Panc1 (cell line): ENCODE measurements at regions of chr7 and their contacts with region 1.

Region 1: GRCh38 chr7:107201795-107202450 is 33.1 kb downstream of the HBP1 start:
- DNase-seq: peak; percentile 42
- ATAC-seq: peak; percentile 91
- H3K4me3 ChIP-seq: no peak overlapping the region
- H3K27ac ChIP-seq: no peak overlapping the region
- H3K4me1 ChIP-seq: no peaks in the 10 kb centered on the region
- H3K27me3 ChIP-seq: no peaks in the 10 kb centered on the region
- CTCF ChIP-seq: peak; percentile 73

Region 2: GRCh38 chr7:107253599-107253998 is 51.7 kb after region 1 on chr7:
- CTCF ChIA-PET with region 1: no interaction called
- POLR2A ChIA-PET with region 1: no interaction called
- in situ Hi-C with region 1: no loop called
- intact Hi-C with region 1: no loop called
- DNase-seq: no peak
- ATAC-seq: no peak
- H3K4me3 ChIP-seq: no peak overlapping the region
- H3K27ac ChIP-seq: no peak overlapping the region
- H3K4me1 ChIP-seq: no peaks in the 10 kb centered on the region
- H3K27me3 ChIP-seq: no peaks in the 10 kb centered on the region
- CTCF ChIP-seq: no peak

Region 3: GRCh38 chr7:107332488-107333269 is 130.8 kb after region 1 on chr7:
- CTCF ChIA-PET with region 1: no interaction called
- POLR2A ChIA-PET with region 1: no interaction called
- in situ Hi-C with region 1: no loop called
- intact Hi-C with region 1: no loop called
- DNase-seq: no peak
- ATAC-seq: no peak
- H3K4me3 ChIP-seq: no peak overlapping the region
- H3K27ac ChIP-seq: no peak overlapping the region
- H3K4me1 ChIP-seq: no peaks in the 10 kb centered on the region
- H3K27me3 ChIP-seq: no peaks in the 10 kb centered on the region
- CTCF ChIP-seq: no peak

Region 4: DNA sequence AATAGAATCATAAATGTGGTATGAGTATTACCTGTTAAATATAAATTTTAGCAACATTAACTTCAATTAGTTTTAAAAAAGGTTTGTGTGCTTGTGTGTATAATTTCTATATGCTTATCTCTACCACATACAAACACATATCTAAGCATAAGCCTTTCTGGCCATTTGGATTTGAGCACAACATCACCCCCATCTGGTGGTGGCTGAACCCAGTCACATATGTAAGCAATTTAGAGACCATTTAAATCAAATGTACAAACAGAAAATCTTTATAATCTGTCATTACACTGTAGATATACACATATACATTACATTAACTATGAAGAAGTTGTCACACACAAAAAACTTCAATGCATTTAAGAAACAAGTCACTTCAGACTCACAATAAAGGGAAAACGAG is 299.7 kb after region 1 on chr7:
- CTCF ChIA-PET with region 1: no interaction called
- POLR2A ChIA-PET with region 1: no interaction called
- in situ Hi-C with region 1: no loop called
- intact Hi-C with region 1: loop called (anchors 2 kb)
- DNase-seq: peak; percentile 48
- ATAC-seq: no peak
- H3K4me3 ChIP-seq: no peak overlapping the region
- H3K27ac ChIP-seq: no peak overlapping the region
- H3K4me1 ChIP-seq: no peaks in the 10 kb centered on the region
- H3K27me3 ChIP-seq: no peaks in the 10 kb centered on the region
- CTCF ChIP-seq: peak; percentile 56; the same call in 1 of the 2 replicates

Region 5: DNA sequence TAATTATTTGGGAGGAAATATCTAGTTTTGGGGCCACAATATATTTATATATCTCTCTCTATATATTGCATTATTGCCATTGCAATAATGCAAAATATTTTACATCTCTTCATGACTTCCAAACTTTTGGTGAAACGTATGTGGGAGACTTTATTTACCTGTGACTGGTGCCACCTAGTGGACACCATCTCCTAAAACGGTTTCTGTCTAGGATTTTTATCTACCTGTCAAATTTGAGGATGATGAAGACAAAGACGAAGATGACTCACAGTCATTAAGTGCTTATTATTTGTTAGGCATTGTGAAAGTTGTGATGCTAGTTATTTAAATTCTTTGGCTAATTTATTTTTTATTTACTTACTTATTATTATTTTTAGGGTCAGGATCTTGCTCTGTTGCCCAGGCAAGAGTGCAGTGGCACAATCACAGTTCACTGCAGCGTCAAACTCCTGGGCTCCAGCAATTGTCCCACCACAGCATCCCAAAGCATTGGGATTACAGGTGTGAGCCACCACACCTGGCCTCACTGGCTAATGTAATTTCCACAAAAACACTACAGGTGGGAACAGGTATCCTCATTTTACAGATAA is 523.3 kb after region 1 on chr7:
- CTCF ChIA-PET with region 1: no interaction called
- POLR2A ChIA-PET with region 1: no interaction called
- in situ Hi-C with region 1: no loop called
- intact Hi-C with region 1: loop called (anchors 5 kb)
- DNase-seq: peak; percentile 32
- ATAC-seq: peak; percentile 56; the same call in 1 of the 2 replicates
- H3K4me3 ChIP-seq: no peak overlapping the region
- H3K27ac ChIP-seq: no peak overlapping the region
- H3K4me1 ChIP-seq: no peaks in the 10 kb centered on the region
- H3K27me3 ChIP-seq: peaks cover 9% of the 10 kb centered on the region; the same call in 1 of the 2 replicates
- CTCF ChIP-seq: peak; percentile 74

Region 6: DNA sequence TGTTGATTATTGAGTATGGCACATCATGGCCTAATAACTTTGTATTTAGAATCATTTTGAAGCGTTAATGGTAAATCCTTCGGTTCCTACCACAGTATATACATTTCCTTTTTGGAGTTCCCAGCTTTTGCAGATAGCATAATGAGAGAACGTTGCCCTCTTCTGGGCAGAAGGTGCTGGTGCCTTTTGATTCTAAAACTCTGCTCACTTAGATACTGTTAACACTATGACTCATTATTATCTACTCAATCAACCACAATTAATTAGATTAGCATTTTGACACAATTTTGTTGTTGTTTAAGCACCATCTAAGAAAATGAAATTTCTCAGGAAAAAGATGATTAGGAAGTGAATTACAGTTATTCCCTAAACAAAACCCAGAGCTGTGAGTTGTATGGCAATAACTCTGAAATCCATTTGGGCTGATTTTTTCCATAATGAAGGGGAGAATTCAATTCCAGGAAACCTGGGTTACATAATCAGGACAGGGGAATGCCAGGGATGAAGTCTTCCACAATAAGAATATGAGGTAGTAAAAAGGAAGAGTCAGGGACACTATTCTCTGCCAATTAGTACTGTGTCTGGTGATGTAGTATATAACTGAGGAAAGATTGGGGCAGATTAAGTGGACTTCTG is 677.6 kb after region 1 on chr7:
- CTCF ChIA-PET with region 1: no interaction called
- POLR2A ChIA-PET with region 1: no interaction called
- in situ Hi-C with region 1: no loop called
- intact Hi-C with region 1: loop called (anchors 10 kb)
- DNase-seq: peak; percentile 56
- ATAC-seq: peak; percentile 90
- H3K4me3 ChIP-seq: no peak overlapping the region
- H3K27ac ChIP-seq: no peak overlapping the region
- H3K4me1 ChIP-seq: peaks cover 3% of the 10 kb centered on the region; the same call in 1 of the 2 replicates
- H3K27me3 ChIP-seq: peaks cover 2% of the 10 kb centered on the region; the same call in 1 of the 2 replicates
- CTCF ChIP-seq: peak; percentile 82; the same call in 1 of the 2 replicates